GM10248 (cell line): ENCODE measurements at regions of chr1 and their contacts with region 1.

Region 1: DNA sequence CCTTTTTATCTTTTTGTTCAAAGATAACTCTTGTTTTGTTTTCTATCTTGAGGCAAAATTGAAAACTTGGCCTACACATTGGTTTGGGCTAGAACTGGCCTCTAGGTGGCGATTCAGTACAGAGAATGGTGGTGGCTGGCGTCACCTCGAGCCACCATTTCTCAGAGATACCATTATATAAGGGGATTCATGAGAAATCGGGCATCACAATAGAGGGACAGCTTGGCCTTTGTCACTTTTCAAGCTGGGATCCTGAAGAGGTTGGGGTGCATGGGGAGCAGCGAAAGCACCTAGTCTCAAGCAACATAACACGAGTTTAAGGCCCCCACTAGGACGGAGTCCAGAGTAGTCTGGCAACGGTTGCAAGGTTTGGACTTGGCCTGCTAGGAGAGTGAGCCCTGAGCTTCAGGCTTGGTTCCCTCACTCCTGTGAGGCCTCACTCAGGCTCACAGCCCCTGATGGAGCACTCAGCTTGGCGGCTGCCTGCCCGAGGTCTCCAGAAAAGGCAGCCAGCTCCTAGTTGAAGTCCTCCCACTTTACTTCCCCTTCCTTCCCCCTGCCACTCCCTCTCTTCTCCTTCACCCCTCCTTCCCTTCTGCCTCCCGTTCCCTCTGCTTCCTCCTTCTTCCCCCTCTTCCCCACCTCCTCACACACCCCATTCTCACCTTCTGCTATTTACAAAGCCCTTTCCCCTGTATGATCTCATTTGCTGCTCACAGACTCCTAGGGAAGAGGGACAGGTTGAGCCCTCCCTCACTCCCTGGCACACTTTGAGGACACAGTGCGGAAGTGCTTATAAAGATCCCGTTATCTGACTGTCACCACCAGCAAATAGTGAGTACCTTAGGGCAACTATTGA is 67.8 kb downstream of the LRIG2 start:
- DNase-seq: peak; percentile 71
- CTCF ChIP-seq: peak; percentile 81

Region 2: DNA sequence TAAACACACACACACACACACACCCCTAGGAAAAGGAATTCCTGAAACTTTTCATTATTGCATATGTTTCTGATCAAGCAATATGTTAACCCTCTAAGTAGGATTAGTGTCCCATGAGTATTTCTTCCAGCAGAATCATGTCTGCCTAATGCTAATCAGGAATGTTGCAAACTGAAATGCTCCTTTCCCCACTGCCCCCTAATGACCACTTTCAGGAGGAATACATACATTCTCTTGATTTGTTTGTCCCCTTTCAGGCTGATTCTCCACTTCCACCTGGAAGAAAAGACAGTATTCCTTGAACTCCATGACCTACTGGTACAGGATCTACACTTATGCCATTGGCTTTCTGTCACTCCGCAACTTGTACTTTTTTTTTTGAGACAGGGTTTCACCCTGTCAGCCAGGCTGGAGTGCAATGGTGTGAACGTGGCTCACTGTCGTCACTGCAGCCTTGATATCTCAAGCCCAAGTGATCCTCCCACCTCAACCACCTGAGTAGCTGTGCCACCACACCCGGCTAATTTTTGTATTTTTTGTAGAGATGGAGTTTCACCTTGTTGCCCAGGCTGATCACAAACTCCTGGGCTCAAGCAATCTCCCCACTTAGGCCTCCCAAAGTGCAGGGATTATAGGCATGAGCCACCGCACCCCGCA is 11.2 kb before region 1 on chr1:
- CTCF ChIA-PET with region 1: interaction called, 20 read pairs
- POLR2A ChIA-PET with region 1: no interaction called
- DNase-seq: no peak
- CTCF ChIP-seq: no peak

Region 3: GRCh38 chr1:113677250-113678158 is 536.7 kb after region 1 on chr1:
- CTCF ChIA-PET with region 1: interaction called, 35 read pairs
- POLR2A ChIA-PET with region 1: no interaction called
- DNase-seq: peak; percentile 55
- CTCF ChIP-seq: peak; percentile 44